Prostate gland (tissue), 2 donors: ENCODE measurements at regions of chr6 and their contacts with region 1.

Region 1: DNA sequence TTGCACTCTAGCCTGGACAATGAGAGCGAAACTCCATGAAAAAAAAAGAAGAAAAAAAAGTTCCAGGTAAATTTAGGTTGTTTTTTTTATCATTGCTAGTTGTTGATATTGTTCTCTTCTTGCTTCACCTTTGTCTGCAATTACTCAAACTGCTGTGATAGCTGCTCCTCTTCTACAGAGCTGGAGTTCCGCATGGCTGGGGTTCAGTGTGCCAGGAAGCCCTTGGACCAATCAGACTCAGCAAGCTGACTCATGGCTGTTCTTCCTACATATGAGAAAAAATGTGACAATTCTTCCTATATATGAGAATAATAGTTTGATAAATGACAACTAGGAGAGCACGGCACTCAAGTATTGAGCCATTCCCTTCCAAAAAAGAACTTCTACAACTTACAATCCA is 28.4 kb downstream of the DPPA5 start:
- DNase-seq: no peak
- H3K4me3 ChIP-seq: no peak overlapping the region
- H3K27ac ChIP-seq: no peak overlapping the region
- H3K4me1 ChIP-seq: no peaks in the 10 kb centered on the region
- H3K27me3 ChIP-seq: no peaks in the 10 kb centered on the region
- CTCF ChIP-seq: no peak
- POLR2A ChIP-seq: no peak

Region 2: DNA sequence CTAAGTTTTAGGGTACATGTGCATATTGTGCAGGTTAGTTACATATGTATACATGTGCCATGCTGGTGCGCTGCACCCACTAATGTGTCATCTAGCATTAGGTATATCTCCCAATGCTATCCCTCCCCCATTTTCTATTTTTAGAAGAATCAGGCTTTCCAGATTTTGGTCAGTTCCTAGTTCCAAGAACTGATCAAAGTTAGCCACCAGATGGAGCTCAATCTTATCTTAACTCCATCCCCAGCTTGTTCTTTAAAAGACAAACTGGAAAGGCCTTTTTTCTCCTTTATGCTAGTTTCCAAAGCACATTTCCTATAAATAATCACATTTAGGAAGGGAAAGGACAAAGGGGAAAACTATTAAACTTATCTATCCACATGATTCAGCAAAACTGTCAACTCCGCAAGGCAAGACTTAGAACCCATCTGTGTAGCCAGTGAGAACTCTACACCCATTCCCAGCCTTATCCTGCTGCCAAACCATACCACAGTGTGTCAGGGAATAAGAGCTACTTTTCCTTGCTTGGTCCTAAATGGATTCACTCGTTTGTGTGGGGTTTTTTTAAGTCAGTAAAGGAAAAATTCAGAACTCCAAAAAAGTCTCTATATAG is 39.9 kb before region 1 on chr6:
- intact Hi-C with region 1: loop called (anchors 2 kb)
- DNase-seq: no peak
- H3K4me3 ChIP-seq: no peak overlapping the region
- H3K27ac ChIP-seq: no peak overlapping the region
- H3K4me1 ChIP-seq: no peaks in the 10 kb centered on the region
- H3K27me3 ChIP-seq: no peaks in the 10 kb centered on the region
- CTCF ChIP-seq: peak in 2 of 4 experiments; percentile 24 to 38
- POLR2A ChIP-seq: no peak